ENCODE measurements at regions of chr14 and their contacts with region 1.

Region 1: GRCh38 chr14:101809671-101810514 is 48.4 kb downstream of the PPP2R5C start:
- DNase-seq: peak; percentile 89 to 94 (median 93)
- H3K4me3 ChIP-seq: peak overlapping the region; percentile 73 to 99 (median 86)
- H3K4me3 Mint-ChIP-seq: peak overlapping the region; percentile 89 to 95
- H3K27ac ChIP-seq: peak overlapping the region; percentile 94 to 99
- H3K27ac Mint-ChIP-seq: peak overlapping the region; percentile 99 to 100 (median 100)
- H3K4me1 ChIP-seq: peaks cover 12 to 22% of the 10 kb centered on the region in 2 donors
- H3K4me1 Mint-ChIP-seq: peaks cover 26% of the 10 kb centered on the region
- H3K27me3 ChIP-seq: no peaks in the 10 kb centered on the region
- H3K27me3 Mint-ChIP-seq: peaks cover 0 to 1% (median 0%) of the 10 kb centered on the region in 3 donors
- CTCF ChIP-seq: no peak

Region 2: GRCh38 chr14:101707068-101707842 is 102.6 kb before region 1 on chr14:
- intact Hi-C with region 1: loop called in 1 of 2 experiments (anchors 5 kb)
- DNase-seq: peak; percentile 78 to 87 (median 82)
- H3K4me3 ChIP-seq: peak overlapping the region in 1 of 3 experiments; percentile 31
- H3K4me3 Mint-ChIP-seq: peak overlapping the region in 1 of 2 donors; percentile 63
- H3K27ac ChIP-seq: no peak overlapping the region
- H3K27ac Mint-ChIP-seq: peak overlapping the region in 3 of 7 donors; percentile 13 to 83 (median 41)
- H3K4me1 ChIP-seq: peaks cover 23 to 34% of the 10 kb centered on the region in 2 donors
- H3K4me1 Mint-ChIP-seq: peaks cover 28% of the 10 kb centered on the region
- H3K27me3 ChIP-seq: peaks cover 15 to 33% of the 10 kb centered on the region in 2 donors
- H3K27me3 Mint-ChIP-seq: peaks cover 37 to 56% (median 40%) of the 10 kb centered on the region in 3 donors
- CTCF ChIP-seq: peak; percentile 84

Region 3: DNA sequence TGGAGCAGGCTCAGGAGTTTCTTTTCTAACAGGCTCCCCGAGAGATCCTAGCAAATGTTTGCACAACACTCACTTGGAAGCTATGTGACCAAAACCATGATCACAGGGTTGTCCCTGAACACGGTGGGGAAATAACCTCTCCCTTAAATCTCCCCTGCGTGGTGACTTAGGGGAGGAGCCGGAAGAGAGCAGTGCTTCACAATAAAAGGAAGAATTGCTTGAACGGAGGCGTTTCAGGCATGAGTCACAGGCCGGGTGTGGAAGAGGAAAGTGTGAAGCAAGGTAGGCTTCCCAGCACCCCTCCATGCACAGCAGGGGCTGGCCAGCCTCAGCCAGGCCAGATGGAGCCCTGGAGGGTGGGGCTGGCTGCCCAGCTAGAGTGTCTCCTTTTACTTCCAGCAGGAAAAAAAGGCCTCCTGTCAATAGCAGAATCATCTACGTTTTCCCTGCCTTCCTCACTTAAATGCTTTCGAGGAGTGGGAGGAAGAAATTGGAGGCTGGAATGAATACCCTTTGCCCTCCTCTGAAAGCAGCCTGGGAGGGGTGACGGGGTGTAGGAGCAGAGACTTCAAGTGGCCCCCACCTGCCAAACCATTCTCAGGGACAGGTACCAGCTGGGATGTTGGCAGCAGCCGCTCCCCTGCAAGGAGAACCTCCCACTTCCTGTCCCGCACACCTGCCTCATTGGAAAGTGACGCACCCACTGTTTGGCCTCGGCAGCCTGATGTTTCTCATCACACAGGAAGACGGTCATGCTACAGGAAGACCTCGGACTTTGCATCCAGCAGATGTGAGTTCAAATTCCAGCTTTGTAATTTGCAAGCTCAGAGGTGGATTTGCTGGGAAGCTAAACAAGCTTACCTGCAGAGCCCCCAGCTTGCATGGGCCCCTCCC is 78.5 kb before region 1 on chr14:
- intact Hi-C with region 1: loop called in 1 of 2 experiments (anchors 2 kb)
- DNase-seq: peak; percentile 94 to 99 (median 96)
- H3K4me3 ChIP-seq: peak overlapping the region in 1 of 3 experiments; percentile 46
- H3K4me3 Mint-ChIP-seq: peak overlapping the region; percentile 16 to 68
- H3K27ac ChIP-seq: peak overlapping the region; percentile 85 to 89
- H3K27ac Mint-ChIP-seq: peak overlapping the region; percentile 89 to 97 (median 96)
- H3K4me1 ChIP-seq: peaks cover 26 to 28% of the 10 kb centered on the region in 2 donors
- H3K4me1 Mint-ChIP-seq: peaks cover 32% of the 10 kb centered on the region
- H3K27me3 ChIP-seq: no peaks in the 10 kb centered on the region
- H3K27me3 Mint-ChIP-seq: peaks cover 10 to 20% (median 11%) of the 10 kb centered on the region in 3 donors
- CTCF ChIP-seq: no peak

Region 4: DNA sequence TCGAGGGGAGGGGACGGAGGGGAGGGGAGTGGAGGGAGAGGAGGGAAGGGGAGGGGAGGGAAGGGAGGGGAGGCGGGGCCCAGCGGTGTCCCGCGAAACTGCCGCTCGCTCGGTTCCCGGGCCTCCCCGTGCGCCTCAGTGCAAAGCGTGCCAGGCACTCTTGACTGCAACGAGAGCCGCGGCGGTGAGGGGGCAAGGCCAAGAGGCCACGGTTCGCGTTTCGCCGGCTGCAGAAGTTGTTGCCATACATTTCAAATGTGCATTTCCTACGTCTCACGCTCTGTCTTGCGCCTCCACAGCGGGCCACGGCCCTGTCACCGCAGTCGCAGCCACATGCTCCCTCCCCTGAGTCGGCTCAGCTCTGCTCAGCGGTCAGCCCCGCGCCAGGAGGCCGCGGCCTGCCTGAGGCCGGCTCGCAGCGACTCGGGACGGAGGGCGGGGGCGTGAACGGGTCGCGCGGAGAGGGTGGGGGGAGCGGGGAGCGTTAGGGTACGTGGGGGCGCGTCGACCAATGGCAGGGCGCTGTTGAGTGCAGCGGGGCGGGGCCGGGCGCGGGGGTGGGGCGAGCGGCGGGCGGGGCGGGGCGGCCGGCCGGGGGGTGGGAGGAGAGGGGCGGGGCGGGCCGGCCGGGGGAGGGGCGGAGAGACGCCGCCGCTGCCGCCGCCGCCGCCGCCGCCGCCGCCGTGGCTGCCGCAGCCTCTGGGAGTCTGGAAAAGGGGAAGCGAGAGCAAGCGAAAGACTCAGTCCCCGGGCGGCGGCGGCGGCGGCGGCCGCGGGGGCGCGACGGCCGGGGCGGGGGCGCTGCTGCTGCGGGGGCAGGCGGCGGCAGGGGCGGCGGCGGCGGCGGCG is 48.6 kb before region 1 on chr14 and contains the start of gene PPP2R5C:
- intact Hi-C with region 1: no loop called
- DNase-seq: peak; percentile 79 to 89 (median 87)
- H3K4me3 ChIP-seq: peak within 1 kb of the TSS; percentile 84 to 95 (median 90)
- H3K4me3 Mint-ChIP-seq: peak within 1 kb of the TSS; percentile 90 to 92
- H3K27ac ChIP-seq: peak within 1 kb of the TSS; percentile 87 to 90
- H3K27ac Mint-ChIP-seq: peak within 1 kb of the TSS; percentile 54 to 91 (median 84)
- H3K4me1 ChIP-seq: peaks cover 11 to 18% of the 10 kb centered on the region in 2 donors
- H3K4me1 Mint-ChIP-seq: peaks cover 17% of the 10 kb centered on the region
- H3K27me3 ChIP-seq: peaks cover 16 to 56% of the 10 kb centered on the region in 2 donors
- H3K27me3 Mint-ChIP-seq: peaks cover 39 to 60% (median 51%) of the 10 kb centered on the region in 3 donors
- CTCF ChIP-seq: no peak
- polyA plus RNA-seq, gene PPP2R5C: 61.9 to 72.5 (median 64.0) TPM

Region 5: DNA sequence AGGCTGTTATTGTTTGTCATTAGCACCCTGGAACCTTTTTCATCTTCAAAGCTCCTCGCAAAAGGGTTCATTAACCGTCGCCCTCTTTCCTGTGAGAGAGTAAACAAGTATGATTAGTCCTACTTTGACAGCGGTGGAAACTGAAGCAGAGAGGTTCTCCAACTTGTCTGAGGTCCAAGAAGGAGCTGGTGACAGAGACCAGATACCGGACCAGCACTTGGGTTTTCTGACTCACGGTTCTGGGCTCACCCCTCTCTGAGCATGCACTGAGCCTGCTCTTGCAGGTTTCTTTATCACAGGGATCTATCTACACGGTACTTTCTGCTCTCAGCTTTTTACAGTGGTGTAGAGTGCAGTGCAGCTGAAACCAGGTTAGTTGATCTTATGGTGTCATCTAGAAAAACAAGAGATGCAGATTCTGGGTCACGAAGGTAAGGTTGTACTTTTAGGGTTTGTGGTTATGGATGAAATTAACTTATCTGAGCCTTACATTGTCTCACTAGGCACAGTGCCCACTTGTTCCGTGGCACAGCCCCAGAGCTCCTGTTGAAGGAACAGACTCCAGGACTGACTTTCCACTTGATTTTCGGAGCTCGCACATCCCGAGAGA is 13.7 kb after region 1 on chr14:
- intact Hi-C with region 1: loop called in 1 of 2 experiments (anchors 2 kb)
- DNase-seq: peak in 1 of 3 donors; percentile 30
- H3K4me3 ChIP-seq: peak overlapping the region in 1 of 3 experiments; percentile 64
- H3K4me3 Mint-ChIP-seq: peak overlapping the region; percentile 39 to 75
- H3K27ac ChIP-seq: peak overlapping the region; percentile 88 to 100
- H3K27ac Mint-ChIP-seq: peak overlapping the region; percentile 99 to 100 (median 100)
- H3K4me1 ChIP-seq: peaks cover 42 to 47% of the 10 kb centered on the region in 2 donors
- H3K4me1 Mint-ChIP-seq: peaks cover 65% of the 10 kb centered on the region
- H3K27me3 ChIP-seq: no peaks in the 10 kb centered on the region
- H3K27me3 Mint-ChIP-seq: no peaks in the 10 kb centered on the region
- CTCF ChIP-seq: no peak